K562 (cell line): ENCODE measurements at regions of chr1 and their contacts with region 1.

Region 1: DNA sequence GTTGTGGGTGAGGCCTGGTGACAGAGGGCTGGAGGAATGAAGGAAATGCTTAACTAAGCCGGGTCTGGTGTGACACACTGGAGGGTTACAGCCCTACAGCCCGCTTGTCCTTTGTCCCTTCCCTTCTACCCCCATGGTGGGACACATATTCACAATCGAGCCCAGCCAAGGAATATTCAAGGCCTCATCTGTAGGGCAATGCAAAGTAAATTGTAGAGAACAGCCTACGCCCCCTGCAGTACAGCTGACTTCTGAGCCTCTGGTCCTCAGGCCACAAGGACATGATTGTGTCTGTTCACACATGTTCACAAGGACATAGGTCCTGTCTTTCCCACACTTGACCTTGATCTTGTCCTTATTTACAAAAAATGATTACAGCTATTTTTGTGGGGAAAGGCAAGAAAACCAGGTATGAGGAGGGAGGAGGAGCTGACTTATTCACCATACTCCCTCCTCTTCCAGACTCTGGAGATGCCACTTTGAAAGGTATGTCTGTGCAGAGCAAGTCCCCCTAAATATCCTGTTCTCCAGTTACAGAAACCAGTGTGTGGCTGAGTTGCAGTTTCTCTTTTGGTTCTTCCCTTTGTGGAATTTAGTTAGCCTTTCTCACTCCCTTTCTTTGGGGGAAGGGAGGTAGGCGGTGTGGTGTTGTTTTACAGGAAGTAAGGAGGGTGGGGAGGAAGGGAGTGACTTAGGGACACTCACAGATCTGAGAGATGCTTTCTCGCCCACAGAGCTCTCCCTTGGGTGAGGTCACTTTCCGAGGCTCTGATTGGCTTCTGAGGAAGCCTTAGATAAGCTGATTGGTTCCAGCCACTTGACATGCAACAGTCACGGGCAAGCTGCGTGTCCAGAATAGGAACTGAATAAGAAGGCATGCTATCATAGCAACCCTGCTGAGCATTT is 14.6 kb downstream of the POLR3GL start:
- DNase-seq: peak; percentile 97 to 99 (median 99)
- ATAC-seq: peak; percentile 94
- H3K4me3 ChIP-seq: no peak overlapping the region
- H3K27ac ChIP-seq: peak overlapping the region; percentile 96
- H3K4me1 ChIP-seq: peaks cover 24 to 63% of the 10 kb centered on the region in 2 experiments
- H3K27me3 ChIP-seq: no peaks in the 10 kb centered on the region
- CTCF ChIP-seq: peak; percentile 53 to 69 (median 54)
- EP300 ChIP-seq: peak; percentile 85
- POLR2A ChIP-seq: peak; percentile 76; the same call in 1 of the 2 replicates
- RAD21 ChIP-seq: peak; percentile 28 to 44; a peak in 2 of 4 replicates

Region 2: GRCh38 chr1:145891587-145892485 is 87.3 kb before region 1 on chr1:
- CTCF ChIA-PET with region 1: interaction called, 3 read pairs
- POLR2A ChIA-PET with region 1: no interaction called
- in situ Hi-C with region 1: no loop called
- intact Hi-C with region 1: loop called (anchors 1 kb)
- DNase-seq: peak; percentile 86 to 89 (median 87)
- ATAC-seq: peak; percentile 92
- H3K4me3 ChIP-seq: peak overlapping the region; percentile 4; the same call in 1 of the 2 replicates
- H3K27ac ChIP-seq: peak overlapping the region; percentile 40; the same call in 2 of the 3 replicates
- H3K4me1 ChIP-seq: peaks cover 15 to 28% of the 10 kb centered on the region in 2 experiments
- H3K27me3 ChIP-seq: no peaks in the 10 kb centered on the region
- CTCF ChIP-seq: peak; percentile 94 to 97 (median 95)
- EP300 ChIP-seq: no peak
- POLR2A ChIP-seq: no peak
- RAD21 ChIP-seq: peak; percentile 90 to 93

Region 3: GRCh38 chr1:145990249-145991097 is 11.4 kb after region 1 on chr1:
- CTCF ChIA-PET with region 1: no interaction called
- POLR2A ChIA-PET with region 1: interaction called, 320 read pairs
- in situ Hi-C with region 1: no loop called
- intact Hi-C with region 1: loop called (anchors 1 kb)
- DNase-seq: no peak
- ATAC-seq: peak; percentile 29
- H3K4me3 ChIP-seq: no peak overlapping the region
- H3K27ac ChIP-seq: no peak overlapping the region
- H3K4me1 ChIP-seq: peaks cover 3 to 21% of the 10 kb centered on the region in 2 experiments; a peak in 4 of 5 replicates
- H3K27me3 ChIP-seq: no peaks in the 10 kb centered on the region
- CTCF ChIP-seq: no peak
- EP300 ChIP-seq: no peak
- POLR2A ChIP-seq: peak; percentile 37
- RAD21 ChIP-seq: no peak

Region 4: DNA sequence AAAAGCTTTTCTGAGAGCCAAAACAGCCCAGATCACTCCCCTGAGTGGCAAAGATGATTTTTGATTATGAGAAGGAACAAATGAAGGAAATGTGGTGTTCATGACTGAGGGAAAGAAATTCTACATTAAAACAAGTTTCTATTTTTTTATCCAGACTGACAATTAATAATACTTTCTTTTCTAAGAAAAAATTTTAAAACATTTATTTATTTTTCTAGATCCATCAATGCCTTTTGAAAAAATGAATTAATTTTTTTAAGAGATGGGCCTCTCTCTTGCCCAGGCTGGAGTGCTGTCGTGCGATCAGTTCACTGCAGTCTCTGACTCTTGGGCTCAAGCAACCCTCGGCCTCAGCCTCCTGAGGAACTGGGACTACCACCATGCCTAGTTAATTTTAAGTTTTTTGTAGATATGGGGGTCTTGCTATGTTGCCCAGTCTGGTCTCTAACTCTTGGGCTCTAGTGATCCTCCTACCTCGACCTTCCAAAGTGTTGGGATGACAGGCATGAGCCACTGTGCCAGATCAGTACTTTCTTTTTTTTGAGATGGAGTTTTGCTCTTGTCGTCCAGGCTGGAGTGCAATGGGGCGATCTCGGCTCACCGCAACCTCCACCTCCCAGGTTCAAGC is 28.5 kb after region 1 on chr1:
- CTCF ChIA-PET with region 1: interaction called, 37 read pairs
- POLR2A ChIA-PET with region 1: interaction called, 7 read pairs
- in situ Hi-C with region 1: no loop called
- intact Hi-C with region 1: loop called (anchors 1 kb)
- DNase-seq: no peak
- ATAC-seq: no peak
- H3K4me3 ChIP-seq: no peak overlapping the region
- H3K27ac ChIP-seq: peak overlapping the region; percentile 94; the same call in 2 of the 3 replicates
- H3K4me1 ChIP-seq: peaks cover 11 to 14% of the 10 kb centered on the region in 2 experiments
- H3K27me3 ChIP-seq: no peaks in the 10 kb centered on the region
- CTCF ChIP-seq: no peak
- EP300 ChIP-seq: no peak
- POLR2A ChIP-seq: no peak
- RAD21 ChIP-seq: no peak